CD8-positive, alpha-beta memory T cell (primary cell): ENCODE measurements at regions of chr12 and their contacts with region 1.

Region 1: DNA sequence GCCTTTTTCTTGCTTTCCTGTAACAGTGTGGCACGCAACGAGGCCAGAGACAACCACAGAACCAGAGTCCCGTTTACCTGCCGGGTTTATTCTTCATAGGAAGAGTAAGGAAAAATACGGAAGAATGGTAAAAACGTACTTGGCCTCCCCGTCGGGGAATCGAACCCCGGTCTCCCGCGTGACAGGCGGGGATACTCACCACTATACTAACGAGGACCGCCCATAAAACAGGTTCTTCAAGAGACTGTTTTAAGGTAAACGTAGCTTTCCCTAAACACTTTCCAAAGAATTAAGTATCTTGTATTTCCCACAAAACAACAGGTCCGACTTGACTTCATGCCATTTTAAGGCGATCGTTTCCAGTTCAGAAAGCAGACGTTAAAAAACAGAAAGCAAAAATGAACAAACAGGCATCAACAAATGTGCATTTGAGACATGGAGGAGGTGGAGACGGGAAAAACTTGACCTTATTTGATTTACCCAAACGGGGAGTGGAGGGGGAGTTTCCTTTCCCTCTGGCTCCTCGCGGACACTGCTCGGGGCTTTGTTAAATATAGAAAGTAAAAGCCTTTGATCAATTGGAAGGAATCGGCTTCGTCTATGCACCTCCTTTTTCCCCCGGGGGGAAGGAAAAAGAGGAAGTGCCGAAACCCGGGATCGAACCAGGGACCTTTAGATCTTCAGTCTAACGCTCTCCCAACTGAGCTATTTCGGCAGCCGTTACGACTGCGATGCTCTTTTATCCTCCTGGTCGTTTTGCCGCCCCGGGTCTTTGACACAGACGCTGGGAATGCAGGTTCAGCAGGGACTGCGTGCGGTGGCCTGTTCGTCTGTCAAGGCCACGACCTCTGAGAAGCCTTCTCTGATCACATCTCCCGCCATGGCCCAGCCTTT is 13.0 kb upstream of the UBC start:
- DNase-seq: peak; percentile 83 to 94 (median 87)
- H3K4me3 ChIP-seq: peak overlapping the region; percentile 60
- H3K4me3 Mint-ChIP-seq: peak overlapping the region; percentile 89 to 96 (median 93)
- H3K27ac ChIP-seq: peak overlapping the region; percentile 69
- H3K27ac Mint-ChIP-seq: peak overlapping the region; percentile 69 to 97 (median 96)
- H3K4me1 ChIP-seq: peaks cover 23% of the 10 kb centered on the region
- H3K4me1 Mint-ChIP-seq: peaks cover 21 to 36% (median 25%) of the 10 kb centered on the region in 3 donors
- H3K27me3 ChIP-seq: no peaks in the 10 kb centered on the region
- H3K27me3 Mint-ChIP-seq: peaks cover 0 to 10% of the 10 kb centered on the region in 2 donors

Region 2: GRCh38 chr12:124906606-124907261 is 20.7 kb before region 1 on chr12:
- CTCF ChIA-PET with region 1: interaction called, 711 read pairs
- POLR2A ChIA-PET with region 1: interaction called, 13 read pairs
- DNase-seq: peak; percentile 77 to 92 (median 83)
- H3K4me3 ChIP-seq: no peak overlapping the region
- H3K4me3 Mint-ChIP-seq: no peak overlapping the region
- H3K27ac ChIP-seq: no peak overlapping the region
- H3K27ac Mint-ChIP-seq: peak overlapping the region in 5 of 8 donors; percentile 7 to 92 (median 63)
- H3K4me1 ChIP-seq: peaks cover 24% of the 10 kb centered on the region
- H3K4me1 Mint-ChIP-seq: peaks cover 26 to 34% (median 33%) of the 10 kb centered on the region in 3 donors
- H3K27me3 ChIP-seq: no peaks in the 10 kb centered on the region
- H3K27me3 Mint-ChIP-seq: no peaks in the 10 kb centered on the region

Region 3: DNA sequence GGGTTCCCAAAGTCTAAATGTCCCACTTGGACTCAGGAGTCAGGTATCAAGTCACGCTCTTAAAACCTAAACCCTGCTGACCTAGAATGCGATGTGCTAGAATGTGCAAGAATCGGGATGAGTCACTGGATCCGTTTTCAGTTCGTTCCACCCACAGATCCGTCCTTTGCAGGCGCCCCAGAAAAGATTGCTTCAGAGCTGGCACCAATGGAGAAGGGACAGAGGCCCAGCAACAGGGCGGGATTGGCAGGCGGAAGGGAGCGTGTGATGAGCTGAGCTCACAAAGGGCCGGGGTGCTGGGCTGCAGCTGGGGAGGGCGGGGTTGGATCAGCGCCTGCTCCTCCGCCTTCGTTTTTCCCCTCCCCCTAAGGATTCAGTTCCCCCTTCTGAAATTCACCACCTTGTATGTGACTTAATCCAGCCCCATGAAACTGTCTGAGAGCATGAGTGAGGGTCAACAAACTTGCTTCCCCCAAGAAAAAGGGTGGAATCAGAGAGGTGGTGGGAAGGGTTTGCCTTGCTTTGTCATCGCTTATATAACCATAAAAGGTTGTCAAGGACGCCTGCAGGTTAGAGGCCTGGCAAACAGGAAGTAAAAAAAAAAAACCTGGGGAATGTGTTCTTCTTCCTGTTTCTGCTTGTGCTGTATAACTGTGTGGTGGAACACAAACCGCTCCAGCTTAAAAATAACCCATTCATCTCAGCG is 10.2 kb before region 1 on chr12:
- CTCF ChIA-PET with region 1: interaction called, 711 read pairs
- POLR2A ChIA-PET with region 1: interaction called, 25 read pairs
- DNase-seq: peak; percentile 90 to 96 (median 93)
- H3K4me3 ChIP-seq: peak overlapping the region; percentile 58
- H3K4me3 Mint-ChIP-seq: peak overlapping the region; percentile 75 to 100 (median 85)
- H3K27ac ChIP-seq: peak overlapping the region; percentile 100
- H3K27ac Mint-ChIP-seq: peak overlapping the region; percentile 85 to 99 (median 96)
- H3K4me1 ChIP-seq: peaks cover 69% of the 10 kb centered on the region
- H3K4me1 Mint-ChIP-seq: peaks cover 87 to 98% (median 93%) of the 10 kb centered on the region in 3 donors
- H3K27me3 ChIP-seq: no peaks in the 10 kb centered on the region
- H3K27me3 Mint-ChIP-seq: peaks cover 0 to 24% of the 10 kb centered on the region in 2 donors

Region 4: GRCh38 chr12:124993626-124994435 is 66.4 kb after region 1 on chr12 and contains the start of gene BRI3BP:
- CTCF ChIA-PET with region 1: no interaction called
- POLR2A ChIA-PET with region 1: no interaction called
- DNase-seq: peak in 2 of 5 donors; percentile 13 to 24
- H3K4me3 ChIP-seq: peak within 1 kb of the TSS; percentile 69
- H3K4me3 Mint-ChIP-seq: peak within 1 kb of the TSS; percentile 89 to 93 (median 91)
- H3K27ac ChIP-seq: peak within 1 kb of the TSS; percentile 54
- H3K27ac Mint-ChIP-seq: peak within 1 kb of the TSS; percentile 63 to 94 (median 77)
- H3K4me1 ChIP-seq: peaks cover 27% of the 10 kb centered on the region
- H3K4me1 Mint-ChIP-seq: peaks cover 24 to 33% (median 28%) of the 10 kb centered on the region in 3 donors
- H3K27me3 ChIP-seq: no peaks in the 10 kb centered on the region
- H3K27me3 Mint-ChIP-seq: no peaks in the 10 kb centered on the region
- total RNA-seq, gene BRI3BP: 35.6 to 36.5 TPM

Region 5: DNA sequence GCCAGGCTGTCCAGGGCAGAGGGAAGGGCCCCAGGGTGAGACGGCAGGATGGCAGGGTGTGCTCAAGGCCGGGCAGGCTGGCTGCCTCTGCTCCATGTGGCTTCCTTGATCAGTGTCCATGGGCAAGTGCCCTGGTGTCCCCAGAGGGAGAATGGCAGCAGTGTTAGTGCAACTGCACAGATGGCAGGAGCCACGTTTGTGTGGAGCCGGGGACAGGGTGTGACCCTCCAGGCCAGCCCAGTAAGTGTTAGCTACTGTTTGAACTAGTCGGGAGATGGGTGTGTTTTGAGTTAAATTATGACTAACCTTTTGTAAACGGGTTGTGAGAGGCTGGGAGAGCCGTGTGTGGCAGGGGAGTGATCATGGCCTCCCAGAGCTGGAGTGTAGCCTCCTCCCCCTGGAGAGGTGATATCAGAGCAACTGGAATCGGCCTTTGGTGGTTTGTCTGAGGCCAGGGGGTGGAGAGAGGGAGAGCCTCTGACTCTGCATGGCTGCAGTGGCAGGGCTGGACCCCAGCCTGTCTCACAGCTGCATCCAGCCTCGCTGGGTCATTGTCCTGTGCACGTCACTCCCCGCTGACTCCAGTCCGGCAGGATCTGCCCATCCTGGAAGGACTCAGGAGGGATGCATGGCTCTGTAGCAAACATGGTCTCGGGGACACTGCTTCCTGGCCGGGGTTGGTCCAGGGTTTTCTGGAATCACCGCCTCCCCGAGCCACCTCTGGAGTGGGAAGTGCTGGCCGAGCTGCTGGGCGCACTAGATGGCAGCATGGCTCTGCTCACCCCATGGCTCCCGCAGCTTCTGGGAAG is 165.6 kb after region 1 on chr12:
- CTCF ChIA-PET with region 1: no interaction called
- POLR2A ChIA-PET with region 1: no interaction called
- DNase-seq: no peak
- H3K4me3 ChIP-seq: no peak overlapping the region
- H3K4me3 Mint-ChIP-seq: no peak overlapping the region
- H3K27ac ChIP-seq: no peak overlapping the region
- H3K27ac Mint-ChIP-seq: peak overlapping the region in 1 of 8 donors; percentile 80
- H3K4me1 ChIP-seq: no peaks in the 10 kb centered on the region
- H3K4me1 Mint-ChIP-seq: peaks cover 0 to 7% (median 3%) of the 10 kb centered on the region in 3 donors
- H3K27me3 ChIP-seq: no peaks in the 10 kb centered on the region
- H3K27me3 Mint-ChIP-seq: no peaks in the 10 kb centered on the region